Activated CD8-positive, alpha-beta T cell treated with anti-CD3 and anti-CD28 coated beads for 36 hours (primary cell): ENCODE measurements at regions of chr1 and their contacts with region 1.

Region 1: DNA sequence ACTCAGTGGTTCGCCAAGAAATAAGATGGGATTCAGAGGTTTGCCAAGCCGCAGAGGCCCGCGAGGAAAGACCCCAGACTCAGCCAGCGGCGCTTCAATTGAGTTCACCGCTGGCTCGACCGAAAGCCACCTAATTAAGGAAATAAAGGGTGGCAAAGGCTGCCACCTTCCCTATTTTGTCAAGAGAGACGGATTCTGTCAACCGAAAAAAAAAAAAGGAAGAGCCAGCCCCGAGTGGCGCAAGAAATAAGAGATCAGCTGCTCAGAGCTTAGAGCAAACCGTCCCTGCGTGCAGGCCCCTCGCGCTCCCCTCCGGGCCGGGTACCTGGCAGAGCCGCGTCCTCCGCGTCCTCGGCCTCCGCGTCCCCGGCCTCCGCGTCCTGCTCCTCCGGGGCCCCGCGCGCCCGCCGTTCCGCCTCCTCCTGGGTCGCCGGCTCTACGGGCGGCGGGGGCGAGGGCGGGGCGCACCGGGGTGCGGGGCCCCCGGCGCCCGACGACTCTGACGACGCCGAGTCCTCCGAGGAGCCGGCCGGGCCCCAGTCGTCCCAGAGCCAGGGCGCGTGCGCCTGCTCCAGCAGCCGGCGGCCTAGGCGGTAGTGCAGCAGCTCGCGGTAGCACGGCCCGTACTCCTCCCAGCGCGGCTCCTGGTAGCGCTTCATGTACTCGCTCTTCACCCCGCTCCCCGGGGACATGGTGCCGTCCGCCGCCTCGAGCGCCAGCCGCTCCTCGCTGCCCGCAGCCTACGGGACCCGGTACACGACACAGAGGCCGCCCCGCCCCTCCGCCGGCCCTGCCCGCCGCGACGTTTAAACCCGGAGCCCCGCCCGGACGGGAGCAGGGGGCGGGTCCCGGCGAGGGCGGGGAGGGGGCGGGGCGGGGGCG is 832 bp downstream of the CCSAP start:
- DNase-seq: peak; percentile 76
- ATAC-seq: peak; percentile 73
- H3K4me3 Mint-ChIP-seq: peak overlapping the region; percentile 80
- H3K27ac Mint-ChIP-seq: peak overlapping the region; percentile 79
- H3K4me1 Mint-ChIP-seq: peaks cover 35% of the 10 kb centered on the region
- H3K27me3 Mint-ChIP-seq: peaks cover 7% of the 10 kb centered on the region
- CTCF ChIP-seq: no peak

Region 2: GRCh38 chr1:229209816-229210215 is 132.2 kb before region 1 on chr1:
- CTCF ChIA-PET with region 1: no interaction called
- POLR2A ChIA-PET with region 1: no interaction called
- intact Hi-C with region 1: no loop called
- DNase-seq: no peak
- ATAC-seq: peak; percentile 6
- H3K4me3 Mint-ChIP-seq: no peak overlapping the region
- H3K27ac Mint-ChIP-seq: no peak overlapping the region
- H3K4me1 Mint-ChIP-seq: peaks cover 11% of the 10 kb centered on the region
- H3K27me3 Mint-ChIP-seq: no peaks in the 10 kb centered on the region
- CTCF ChIP-seq: no peak

Region 3: GRCh38 chr1:229270547-229271447 is 71.2 kb before region 1 on chr1 and contains the start of gene RAB4A:
- CTCF ChIA-PET with region 1: interaction called, 3 read pairs
- POLR2A ChIA-PET with region 1: no interaction called
- intact Hi-C with region 1: loop called (anchors 10 kb)
- DNase-seq: peak; percentile 75
- ATAC-seq: peak; percentile 91
- H3K4me3 Mint-ChIP-seq: peak within 1 kb of the TSS; percentile 88
- H3K27ac Mint-ChIP-seq: peak within 1 kb of the TSS; percentile 78
- H3K4me1 Mint-ChIP-seq: peaks cover 25% of the 10 kb centered on the region
- H3K27me3 Mint-ChIP-seq: no peaks in the 10 kb centered on the region
- CTCF ChIP-seq: no peak
- total RNA-seq, gene RAB4A: 27.2 to 30.6 TPM

Region 4: DNA sequence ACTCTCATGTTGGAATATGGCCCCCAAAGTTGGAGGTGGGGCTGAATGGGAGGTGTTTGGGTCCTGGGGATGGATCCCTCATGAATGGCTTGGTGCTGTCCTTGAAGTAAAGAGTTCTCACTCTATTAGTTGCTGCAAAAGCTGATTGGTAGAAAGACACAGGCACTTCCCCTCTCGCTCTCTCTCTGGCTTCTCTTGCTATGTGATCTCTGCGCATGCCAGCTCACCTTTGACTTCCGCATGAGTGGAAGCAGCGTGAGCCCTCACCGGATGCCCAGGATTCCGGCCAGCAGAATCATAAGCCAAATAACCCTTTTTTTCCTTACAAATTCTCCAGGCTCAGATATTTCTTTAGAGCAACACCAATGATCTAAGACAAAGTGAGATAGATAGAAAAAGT is 21.7 kb after region 1 on chr1:
- CTCF ChIA-PET with region 1: no interaction called
- POLR2A ChIA-PET with region 1: no interaction called
- intact Hi-C with region 1: no loop called
- DNase-seq: no peak
- ATAC-seq: no peak
- H3K4me3 Mint-ChIP-seq: no peak overlapping the region
- H3K27ac Mint-ChIP-seq: no peak overlapping the region
- H3K4me1 Mint-ChIP-seq: no peaks in the 10 kb centered on the region
- H3K27me3 Mint-ChIP-seq: peaks cover 20% of the 10 kb centered on the region
- CTCF ChIP-seq: no peak

Region 5: GRCh38 chr1:229388876-229389580 is 47.0 kb after region 1 on chr1:
- CTCF ChIA-PET with region 1: no interaction called
- POLR2A ChIA-PET with region 1: no interaction called
- intact Hi-C with region 1: no loop called
- DNase-seq: no peak
- ATAC-seq: no peak
- H3K4me3 Mint-ChIP-seq: no peak overlapping the region
- H3K27ac Mint-ChIP-seq: no peak overlapping the region
- H3K4me1 Mint-ChIP-seq: no peaks in the 10 kb centered on the region
- H3K27me3 Mint-ChIP-seq: peaks cover 10% of the 10 kb centered on the region
- CTCF ChIP-seq: no peak

Region 6: GRCh38 chr1:229408458-229409037 is 66.5 kb after region 1 on chr1:
- CTCF ChIA-PET with region 1: no interaction called
- POLR2A ChIA-PET with region 1: no interaction called
- intact Hi-C with region 1: loop called (anchors 10 kb)
- DNase-seq: no peak
- ATAC-seq: no peak
- H3K4me3 Mint-ChIP-seq: no peak overlapping the region
- H3K27ac Mint-ChIP-seq: no peak overlapping the region
- H3K4me1 Mint-ChIP-seq: peaks cover 20% of the 10 kb centered on the region
- H3K27me3 Mint-ChIP-seq: peaks cover 67% of the 10 kb centered on the region
- CTCF ChIP-seq: no peak

Region 7: DNA sequence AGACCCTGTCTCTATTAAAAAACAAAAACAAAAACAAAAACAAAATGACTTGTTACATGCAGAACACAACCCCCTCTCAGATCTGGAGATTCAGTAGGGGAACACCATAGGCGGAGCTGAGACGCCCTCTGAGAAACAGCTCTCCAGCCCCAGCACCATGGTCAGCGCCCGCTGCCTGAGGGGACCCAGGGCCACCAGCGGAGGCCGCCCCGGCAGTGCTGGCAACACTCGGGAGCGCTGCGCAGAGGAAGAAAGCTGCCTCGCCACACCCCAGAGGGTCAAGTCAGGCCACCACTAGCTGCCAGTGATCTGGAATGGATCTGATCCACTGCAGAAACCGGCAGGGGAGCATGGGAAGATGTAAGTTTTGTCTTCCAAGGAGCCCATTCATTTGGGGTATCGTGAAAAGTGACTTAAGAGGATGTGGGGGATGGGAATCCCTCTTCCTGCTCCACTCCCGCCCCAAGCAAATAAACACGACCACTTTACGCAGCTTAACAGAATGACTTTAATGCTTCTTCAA is 88.8 kb after region 1 on chr1:
- CTCF ChIA-PET with region 1: no interaction called
- POLR2A ChIA-PET with region 1: no interaction called
- intact Hi-C with region 1: no loop called
- DNase-seq: peak; percentile 71
- ATAC-seq: peak; percentile 61
- H3K4me3 Mint-ChIP-seq: peak overlapping the region; percentile 56
- H3K27ac Mint-ChIP-seq: no peak overlapping the region
- H3K4me1 Mint-ChIP-seq: peaks cover 15% of the 10 kb centered on the region
- H3K27me3 Mint-ChIP-seq: peaks cover 67% of the 10 kb centered on the region
- CTCF ChIP-seq: no peak